Activated naive CD4-positive, alpha-beta T cell treated with anti-CD3 and anti-CD28 coated beads for 36 hours (primary cell): ENCODE measurements at regions of chrX and their contacts with region 1.

Region 1: DNA sequence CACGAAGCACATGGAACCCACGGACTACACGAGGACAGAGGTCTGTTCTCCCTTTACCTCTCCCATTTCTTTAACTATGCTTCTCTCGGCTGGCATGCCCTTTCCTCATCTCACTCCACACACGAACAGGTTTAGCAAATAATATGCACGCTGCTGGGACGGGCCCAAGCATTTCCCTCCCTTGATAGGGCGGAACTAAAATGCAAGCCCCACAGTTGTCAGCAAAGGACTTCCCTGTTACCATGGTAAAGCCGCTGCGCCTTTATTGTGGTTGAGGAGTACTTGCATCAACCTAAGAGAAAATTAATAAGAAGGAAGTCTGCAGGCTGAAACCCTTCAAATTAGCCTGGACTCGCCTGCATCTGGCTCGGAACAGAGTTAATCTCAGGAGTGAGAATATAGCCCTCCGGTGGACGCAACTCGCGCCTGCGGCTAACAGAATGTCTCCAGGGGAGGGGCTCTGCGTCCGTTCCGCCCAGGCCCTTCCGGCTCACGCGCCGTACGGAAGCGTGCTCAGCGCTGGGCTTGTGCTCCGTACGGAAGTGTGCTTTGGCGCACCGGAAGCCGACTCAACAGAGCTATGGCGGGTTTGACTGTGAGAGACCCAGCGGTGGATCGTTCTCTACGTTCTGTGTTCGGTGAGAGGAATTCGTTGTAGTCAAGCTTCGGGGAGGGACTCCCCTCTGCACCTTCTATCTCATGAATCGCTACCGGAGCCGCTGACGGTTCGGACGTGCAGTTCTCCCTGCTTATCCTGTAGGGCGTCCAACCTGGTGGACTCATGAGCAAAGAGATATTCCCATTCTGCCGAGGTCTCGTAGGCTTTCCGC is at the start of gene CSTF2:
- DNase-seq: peak; percentile 84
- H3K4me3 Mint-ChIP-seq: peak within 1 kb of the TSS; percentile 90
- H3K27ac Mint-ChIP-seq: peak within 1 kb of the TSS; percentile 95
- H3K4me1 Mint-ChIP-seq: peaks cover 11% of the 10 kb centered on the region
- H3K27me3 Mint-ChIP-seq: no peaks in the 10 kb centered on the region
- total RNA-seq, gene CSTF2: 44.3 to 46.8 TPM

Region 2: GRCh38 chrX:100695302-100695701 is 124.8 kb before region 1 on chrX:
- CTCF ChIA-PET with region 1: no interaction called
- intact Hi-C with region 1: loop called (anchors 2 kb)
- DNase-seq: peak; percentile 45
- H3K4me3 Mint-ChIP-seq: no peak overlapping the region
- H3K27ac Mint-ChIP-seq: no peak overlapping the region
- H3K4me1 Mint-ChIP-seq: peaks cover 3% of the 10 kb centered on the region
- H3K27me3 Mint-ChIP-seq: peaks cover 16% of the 10 kb centered on the region

Region 3: GRCh38 chrX:101415180-101416145 is 595.4 kb after region 1 on chrX:
- CTCF ChIA-PET with region 1: no interaction called
- intact Hi-C with region 1: no loop called
- DNase-seq: peak; percentile 30
- H3K4me3 Mint-ChIP-seq: no peak overlapping the region
- H3K27ac Mint-ChIP-seq: peak overlapping the region; percentile 88
- H3K4me1 Mint-ChIP-seq: peaks cover 60% of the 10 kb centered on the region
- H3K27me3 Mint-ChIP-seq: no peaks in the 10 kb centered on the region